H1 (cell line): ENCODE measurements at regions of chr2 and their contacts with region 1.

Region 1: GRCh38 chr2:135004005-135004746 is 43.1 kb downstream of the MAP3K19 start:
- DNase-seq: peak; percentile 50 to 85
- H3K4me3 ChIP-seq: no peak overlapping the region
- H3K27ac ChIP-seq: no peak overlapping the region
- H3K4me1 ChIP-seq: peaks cover 0 to 4% (median under 1%) of the 10 kb centered on the region in 4 experiments; a peak in 1 of 7 replicates
- H3K27me3 ChIP-seq: peaks cover 0 to 4% (median 0%) of the 10 kb centered on the region in 4 experiments; a peak in 2 of 7 replicates
- CTCF ChIP-seq: peak; percentile 85 to 92 (median 92)
- EP300 ChIP-seq: no peak
- POLR2A ChIP-seq: no peak
- RAD21 ChIP-seq: peak; percentile 97 to 98

Region 2: DNA sequence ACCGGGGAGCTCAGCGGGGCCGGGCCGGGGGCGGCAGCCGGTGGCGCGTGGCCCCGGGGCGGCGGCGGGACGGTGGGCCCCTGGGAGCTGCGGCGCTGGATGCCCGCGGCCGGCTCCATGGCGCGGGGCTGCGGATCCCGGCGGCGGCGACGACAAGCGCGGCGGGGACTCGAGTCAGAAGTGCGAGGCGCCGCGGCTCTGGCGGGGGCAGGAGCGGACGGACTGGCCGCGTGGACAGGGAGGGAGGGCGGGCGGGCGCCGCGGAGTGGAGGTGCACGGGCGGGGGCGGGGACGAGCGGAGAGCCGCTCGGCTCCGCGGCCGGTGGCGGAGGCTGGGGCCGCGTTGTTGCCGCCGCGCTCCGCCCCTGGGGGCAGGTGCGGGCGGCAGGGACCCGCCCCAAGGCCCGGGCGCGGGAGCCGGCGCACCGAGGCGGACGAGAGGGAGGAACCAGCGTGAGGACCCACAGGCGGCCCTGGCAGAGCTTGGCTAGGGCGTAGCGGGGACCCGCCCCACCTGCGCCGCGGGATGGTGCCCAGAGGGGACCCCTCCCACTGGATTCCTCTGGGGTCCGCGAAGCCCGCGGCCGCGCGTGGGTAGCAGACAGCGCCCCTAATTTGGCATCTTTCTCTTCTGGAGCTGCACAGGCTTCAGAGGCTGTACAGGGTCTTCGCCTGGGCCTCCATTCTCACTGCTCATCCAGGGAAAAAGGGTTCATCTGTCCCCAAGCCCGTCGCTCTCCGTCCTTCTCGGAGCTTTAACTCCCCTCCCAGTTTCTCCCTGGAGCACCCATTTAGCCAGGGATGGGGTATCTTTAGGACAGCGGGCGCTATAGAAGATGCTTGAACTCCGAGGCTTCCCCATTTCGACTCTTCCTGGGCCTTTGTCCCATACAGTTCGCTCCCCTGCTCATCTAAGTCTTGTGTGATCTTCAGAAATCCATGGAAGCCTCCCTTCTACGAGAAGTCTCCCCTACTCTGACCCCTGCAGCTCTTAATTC is 285.1 kb before region 1 on chr2 and contains the start of gene TMEM163:
- CTCF ChIA-PET with region 1: no interaction called
- POLR2A ChIA-PET with region 1: no interaction called
- DNase-seq: peak in 1 of 2 experiments; percentile 74
- H3K4me3 ChIP-seq: peak within 1 kb of the TSS; percentile 36 to 80 (median 69)
- H3K27ac ChIP-seq: no peak within 1 kb of the TSS
- H3K4me1 ChIP-seq: peaks cover 0 to 8% (median 3%) of the 10 kb centered on the region in 4 experiments; a peak in 5 of 7 replicates
- H3K27me3 ChIP-seq: peaks cover 19 to 48% (median 41%) of the 10 kb centered on the region in 4 experiments
- CTCF ChIP-seq: no peak
- EP300 ChIP-seq: no peak
- POLR2A ChIP-seq: no peak
- RAD21 ChIP-seq: no peak; a peak in 1 of 4 replicates
- total RNA-seq, gene TMEM163: 2.8 and 2.9 TPM in 2 replicates

Region 3: DNA sequence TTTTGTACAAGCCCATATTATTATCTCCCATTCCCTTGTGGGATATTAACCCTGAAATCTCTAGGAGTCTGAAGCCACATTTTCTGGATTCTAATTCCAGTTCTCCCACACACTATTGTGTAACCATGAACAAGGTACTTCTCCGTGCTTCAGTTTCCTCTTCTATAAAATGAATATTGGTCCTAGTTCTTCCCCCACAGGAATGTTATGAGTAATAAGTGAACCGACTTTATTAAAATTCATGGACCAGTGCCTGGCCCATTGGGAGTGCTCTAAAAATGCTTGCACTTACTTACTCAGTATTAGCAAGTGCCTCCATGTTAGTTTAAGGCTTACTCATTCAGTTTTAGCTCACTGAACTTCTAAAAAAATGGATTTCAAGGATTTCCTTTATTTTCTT is 167.2 kb before region 1 on chr2:
- CTCF ChIA-PET with region 1: no interaction called
- POLR2A ChIA-PET with region 1: no interaction called
- DNase-seq: no peak
- H3K4me3 ChIP-seq: no peak overlapping the region
- H3K27ac ChIP-seq: no peak overlapping the region
- H3K4me1 ChIP-seq: no peaks in the 10 kb centered on the region
- H3K27me3 ChIP-seq: no peaks in the 10 kb centered on the region
- CTCF ChIP-seq: no peak
- EP300 ChIP-seq: no peak
- POLR2A ChIP-seq: no peak
- RAD21 ChIP-seq: no peak

Region 4: GRCh38 chr2:134918526-134919340 is 85.4 kb before region 1 on chr2 and contains the start of gene CCNT2:
- CTCF ChIA-PET with region 1: no interaction called
- POLR2A ChIA-PET with region 1: no interaction called
- DNase-seq: peak; percentile 97 to 99
- H3K4me3 ChIP-seq: peak within 1 kb of the TSS; percentile 79 to 99 (median 99)
- H3K27ac ChIP-seq: peak within 1 kb of the TSS; percentile 99
- H3K4me1 ChIP-seq: peaks cover 0 to 5% (median 1%) of the 10 kb centered on the region in 4 experiments; a peak in 2 of 7 replicates
- H3K27me3 ChIP-seq: no peaks in the 10 kb centered on the region
- CTCF ChIP-seq: no peak
- EP300 ChIP-seq: no peak
- POLR2A ChIP-seq: peak; percentile 53 to 81
- RAD21 ChIP-seq: no peak
- total RNA-seq, gene CCNT2: 38.3 and 39.7 TPM in 2 replicates

Region 5: GRCh38 chr2:134943540-134943939 is 60.6 kb before region 1 on chr2:
- CTCF ChIA-PET with region 1: no interaction called
- POLR2A ChIA-PET with region 1: no interaction called
- DNase-seq: no peak
- H3K4me3 ChIP-seq: no peak overlapping the region
- H3K27ac ChIP-seq: no peak overlapping the region
- H3K4me1 ChIP-seq: peaks cover 0 to 4% (median 0%) of the 10 kb centered on the region in 4 experiments; a peak in 1 of 7 replicates
- H3K27me3 ChIP-seq: no peaks in the 10 kb centered on the region
- CTCF ChIP-seq: no peak
- EP300 ChIP-seq: no peak
- POLR2A ChIP-seq: no peak
- RAD21 ChIP-seq: no peak

Region 6: DNA sequence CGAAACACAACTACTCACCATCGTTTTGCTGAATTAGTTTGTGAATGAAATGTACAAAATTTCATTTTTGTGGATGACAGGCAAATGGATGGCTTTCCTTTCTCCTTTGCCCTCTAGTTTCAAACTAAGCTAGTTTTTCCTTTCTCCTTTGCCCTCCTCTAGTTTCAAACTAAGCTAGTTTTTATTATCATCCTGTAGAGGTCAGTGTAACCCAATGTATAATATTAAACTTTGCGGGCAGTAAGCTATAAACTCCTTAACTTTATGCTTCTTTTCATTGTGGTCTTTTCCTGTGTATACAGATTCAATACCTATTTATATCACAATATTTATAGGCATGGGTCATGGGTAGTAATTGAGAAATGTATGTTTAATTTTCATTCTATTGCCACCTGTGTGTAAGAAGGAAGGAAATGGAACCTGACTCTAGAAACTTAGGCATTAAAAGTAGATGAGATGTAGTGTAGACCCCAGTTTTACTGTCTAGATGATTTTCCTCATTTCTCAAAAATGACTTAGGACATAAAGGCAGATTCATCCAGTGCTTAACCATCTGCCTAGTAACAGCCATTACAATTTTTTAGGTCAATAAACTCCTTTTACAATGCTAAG is 15.1 kb before region 1 on chr2:
- CTCF ChIA-PET with region 1: interaction called, 11 read pairs
- POLR2A ChIA-PET with region 1: no interaction called
- DNase-seq: no peak
- H3K4me3 ChIP-seq: no peak overlapping the region
- H3K27ac ChIP-seq: no peak overlapping the region
- H3K4me1 ChIP-seq: no peaks in the 10 kb centered on the region
- H3K27me3 ChIP-seq: no peaks in the 10 kb centered on the region
- CTCF ChIP-seq: peak in 1 of 3 experiments; percentile 46; a peak in 2 of 4 replicates
- EP300 ChIP-seq: no peak
- POLR2A ChIP-seq: no peak
- RAD21 ChIP-seq: peak; percentile 59 to 61

Region 7: GRCh38 chr2:135600915-135601314 is 596.7 kb after region 1 on chr2:
- CTCF ChIA-PET with region 1: interaction called, 13 read pairs
- POLR2A ChIA-PET with region 1: no interaction called
- DNase-seq: no peak
- H3K4me3 ChIP-seq: no peak overlapping the region
- H3K27ac ChIP-seq: no peak overlapping the region
- H3K4me1 ChIP-seq: peaks cover 0 to 4% (median 0%) of the 10 kb centered on the region in 4 experiments; a peak in 1 of 7 replicates
- H3K27me3 ChIP-seq: no peaks in the 10 kb centered on the region
- CTCF ChIP-seq: no peak
- EP300 ChIP-seq: no peak
- POLR2A ChIP-seq: no peak
- RAD21 ChIP-seq: peak in 1 of 2 experiments; percentile 28; a peak in 1 of 4 replicates